Adrenal gland (tissue), 19 donors: ENCODE measurements at regions of chr11 and their contacts with region 1.

Region 1: DNA sequence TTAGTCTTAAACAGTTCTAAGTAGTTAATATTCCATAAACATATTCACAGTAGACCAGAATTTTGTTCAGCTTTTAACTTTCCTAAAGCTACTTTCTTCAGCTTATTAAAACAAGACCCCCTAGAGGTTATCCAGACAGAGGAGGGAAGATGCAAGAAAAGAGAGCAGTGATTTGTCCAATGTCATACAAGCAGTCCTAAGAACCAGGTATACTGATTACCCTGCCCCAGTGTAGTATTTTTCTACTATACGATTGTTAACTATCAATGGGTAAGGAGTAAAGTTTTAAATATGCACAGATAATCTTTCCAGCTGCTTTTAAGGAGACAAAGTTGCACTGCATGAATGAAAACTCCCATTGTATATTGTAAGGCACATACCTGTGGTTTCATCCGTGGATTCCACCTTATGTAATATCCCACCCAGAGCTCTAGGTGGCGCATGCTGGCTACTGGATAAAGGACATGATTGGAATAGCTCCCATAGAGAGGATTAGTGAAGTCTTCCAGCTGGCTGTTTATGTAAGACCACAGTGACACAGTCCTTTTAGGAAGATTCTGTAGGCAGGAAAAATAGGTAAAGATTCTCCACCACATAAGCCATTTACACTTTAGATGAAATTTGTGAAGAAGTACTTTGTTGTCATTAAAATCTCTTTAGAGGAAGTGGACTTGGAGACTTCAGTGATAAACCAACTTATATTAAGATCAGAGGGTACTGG is 45.6 kb downstream of the CEP57 start:
- DNase-seq: peak; percentile 57 to 87 (median 73)
- H3K4me3 ChIP-seq: no peak overlapping the region
- H3K27ac ChIP-seq: peak overlapping the region in 1 of 5 donors; percentile 32
- H3K4me1 ChIP-seq: peaks cover 0 to 4% of the 10 kb centered on the region in 2 donors
- H3K27me3 ChIP-seq: no peaks in the 10 kb centered on the region
- CTCF ChIP-seq: peak; percentile 75 to 92 (median 88)
- POLR2A ChIP-seq: no peak

Region 2: DNA sequence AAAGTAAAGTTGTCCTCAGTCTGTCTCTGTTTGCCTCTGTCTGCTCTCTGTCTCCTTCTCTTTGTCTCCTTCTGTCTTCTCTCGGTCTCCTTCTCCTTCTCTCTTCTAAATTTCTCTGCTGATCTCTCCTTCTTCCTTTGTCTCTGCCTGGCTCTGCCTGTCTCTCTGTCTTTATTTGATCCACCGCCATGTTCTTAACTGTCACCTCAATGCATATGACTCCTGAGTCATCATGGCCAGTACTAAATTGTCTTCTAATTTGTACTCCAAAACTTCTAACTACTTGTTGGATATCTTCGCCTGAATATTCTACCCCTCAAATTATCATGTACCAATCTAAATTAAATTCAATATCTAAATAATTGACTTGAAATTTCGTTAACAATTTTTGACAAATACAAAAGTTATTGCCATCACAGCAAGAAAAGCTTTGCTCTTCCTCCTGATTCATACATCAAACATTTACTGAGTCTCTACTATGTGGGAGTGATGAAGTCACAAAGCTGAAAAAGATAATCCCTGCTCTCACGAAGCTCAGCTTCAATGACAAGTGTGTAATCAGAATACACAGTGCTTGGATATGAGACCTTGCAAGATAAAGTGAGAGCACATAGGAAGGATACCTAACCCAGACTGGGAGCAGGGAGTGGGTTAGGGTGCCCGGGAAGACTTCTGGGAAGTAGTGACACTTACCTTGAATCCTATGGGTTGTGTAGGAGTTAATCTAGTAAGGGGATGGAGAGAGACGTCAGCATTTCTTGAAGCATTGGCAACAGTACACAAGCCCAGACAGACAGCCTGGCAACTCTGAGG is 314.0 kb after region 1 on chr11:
- intact Hi-C with region 1: loop called in 1 of 2 experiments (anchors 10 kb)
- DNase-seq: no peak
- H3K4me3 ChIP-seq: no peak overlapping the region
- H3K27ac ChIP-seq: peak overlapping the region in 1 of 5 donors; percentile 46
- H3K4me1 ChIP-seq: peaks cover 0 to 17% of the 10 kb centered on the region in 2 donors
- H3K27me3 ChIP-seq: no peaks in the 10 kb centered on the region
- CTCF ChIP-seq: no peak
- POLR2A ChIP-seq: no peak

Region 3: DNA sequence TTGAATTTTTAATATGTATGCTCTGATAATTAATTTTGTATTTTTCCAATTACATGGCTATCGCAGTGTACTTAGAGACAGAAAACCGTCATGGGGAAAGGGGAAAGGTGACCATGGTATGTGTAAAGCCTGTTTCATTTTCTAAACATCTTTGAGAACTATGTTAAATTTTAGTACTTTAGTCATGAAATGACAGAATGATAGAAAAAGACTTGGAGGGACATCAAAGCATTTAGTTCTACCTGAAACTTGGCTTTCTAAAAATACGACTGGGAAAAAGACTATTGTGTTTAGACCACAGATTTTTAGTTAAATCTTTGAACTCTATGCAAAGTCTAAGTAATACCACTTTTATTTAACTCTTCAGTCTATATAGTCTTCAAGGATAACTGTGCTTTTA is 453.0 kb after region 1 on chr11:
- intact Hi-C with region 1: no loop called
- DNase-seq: no peak
- H3K4me3 ChIP-seq: no peak overlapping the region
- H3K27ac ChIP-seq: no peak overlapping the region
- H3K4me1 ChIP-seq: peaks cover 9 to 15% of the 10 kb centered on the region in 2 donors
- H3K27me3 ChIP-seq: no peaks in the 10 kb centered on the region
- CTCF ChIP-seq: no peak
- POLR2A ChIP-seq: no peak

Region 4: GRCh38 chr11:96342961-96343711 is 507.2 kb after region 1 on chr11 and contains the start of gene MAML2:
- intact Hi-C with region 1: loop called in 1 of 2 experiments (anchors 5 kb)
- DNase-seq: peak; percentile 91 to 97 (median 95)
- H3K4me3 ChIP-seq: peak within 1 kb of the TSS in 3 of 4 donors; percentile 46 to 90 (median 75)
- H3K27ac ChIP-seq: peak within 1 kb of the TSS in 4 of 5 donors; percentile 42 to 92 (median 83)
- H3K4me1 ChIP-seq: peaks cover 23 to 36% of the 10 kb centered on the region in 2 donors
- H3K27me3 ChIP-seq: no peaks in the 10 kb centered on the region
- CTCF ChIP-seq: peak; percentile 78 to 97 (median 91)
- POLR2A ChIP-seq: peak in 1 of 2 donors; percentile 55
- total RNA-seq, gene MAML2: 6.2 to 19.4 (median 11.0) TPM